Naive thymus-derived CD8-positive, alpha-beta T cell (primary cell): ENCODE measurements at regions of chr1 and their contacts with region 1.

Region 1: GRCh38 chr1:44775078-44775929 is at the start of gene RPS8:
- DNase-seq: peak; percentile 67 to 95 (median 87)
- ATAC-seq: peak; percentile 82 to 83
- H3K4me3 Mint-ChIP-seq: peak within 1 kb of the TSS; percentile 84 to 100 (median 93)
- H3K27ac Mint-ChIP-seq: peak within 1 kb of the TSS; percentile 92 to 99 (median 96)
- H3K4me1 Mint-ChIP-seq: peaks cover 23 to 42% (median 34%) of the 10 kb centered on the region in 4 donors
- H3K27me3 Mint-ChIP-seq: no peaks in the 10 kb centered on the region
- polyA plus RNA-seq, gene RPS8: 1,336 to 1,571 (median 1,431) TPM

Region 2: DNA sequence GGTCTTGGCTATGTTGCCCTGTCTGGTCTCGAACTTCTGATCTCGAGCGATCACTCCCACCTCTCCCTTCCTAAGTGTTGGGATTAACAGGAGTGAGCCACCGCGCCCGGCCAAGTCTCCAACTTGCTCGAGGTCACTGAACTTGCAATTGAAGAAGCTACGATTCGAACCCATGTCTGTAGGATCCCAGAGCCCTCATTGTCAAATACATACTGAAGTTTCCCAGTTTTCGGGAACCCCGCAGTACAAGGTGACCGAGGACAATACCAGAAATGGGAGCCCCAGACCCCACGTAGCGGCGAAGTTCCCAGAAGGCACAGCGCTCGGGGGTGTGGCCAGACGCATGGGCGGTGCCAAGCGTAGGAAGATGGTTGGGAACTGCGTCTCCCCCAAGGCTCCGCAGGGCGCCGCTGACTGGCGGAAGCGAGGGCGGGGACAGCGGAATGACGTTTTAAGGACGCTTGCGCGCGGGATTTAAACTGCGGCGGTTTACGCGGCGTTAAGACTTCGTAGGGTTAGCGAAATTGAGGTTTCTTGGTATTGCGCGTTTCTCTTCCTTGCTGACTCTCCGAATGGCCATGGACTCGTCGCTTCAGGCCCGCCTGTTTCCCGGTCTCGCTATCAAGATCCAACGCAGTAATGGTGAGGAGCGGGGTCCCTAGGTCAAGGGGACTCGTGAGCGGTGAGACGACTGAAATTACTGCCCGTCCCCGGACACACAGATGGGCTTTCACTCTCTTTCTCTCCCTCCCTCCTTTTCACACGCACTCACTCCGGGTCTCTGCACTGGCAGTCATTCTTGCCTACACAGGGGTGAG is 35.7 kb before region 1 on chr1 and contains the start of gene KIF2C:
- POLR2A ChIA-PET with region 1: interaction called, 13 read pairs
- DNase-seq: peak; percentile 92 to 97 (median 94)
- ATAC-seq: peak; percentile 99 to 100
- H3K4me3 Mint-ChIP-seq: peak within 1 kb of the TSS; percentile 83 to 96 (median 93)
- H3K27ac Mint-ChIP-seq: peak within 1 kb of the TSS; percentile 83 to 98 (median 96)
- H3K4me1 Mint-ChIP-seq: peaks cover 5 to 19% (median 14%) of the 10 kb centered on the region in 4 donors
- H3K27me3 Mint-ChIP-seq: no peaks in the 10 kb centered on the region
- polyA plus RNA-seq, gene KIF2C: 0.40 to 0.61 (median 0.40) TPM

Region 3: DNA sequence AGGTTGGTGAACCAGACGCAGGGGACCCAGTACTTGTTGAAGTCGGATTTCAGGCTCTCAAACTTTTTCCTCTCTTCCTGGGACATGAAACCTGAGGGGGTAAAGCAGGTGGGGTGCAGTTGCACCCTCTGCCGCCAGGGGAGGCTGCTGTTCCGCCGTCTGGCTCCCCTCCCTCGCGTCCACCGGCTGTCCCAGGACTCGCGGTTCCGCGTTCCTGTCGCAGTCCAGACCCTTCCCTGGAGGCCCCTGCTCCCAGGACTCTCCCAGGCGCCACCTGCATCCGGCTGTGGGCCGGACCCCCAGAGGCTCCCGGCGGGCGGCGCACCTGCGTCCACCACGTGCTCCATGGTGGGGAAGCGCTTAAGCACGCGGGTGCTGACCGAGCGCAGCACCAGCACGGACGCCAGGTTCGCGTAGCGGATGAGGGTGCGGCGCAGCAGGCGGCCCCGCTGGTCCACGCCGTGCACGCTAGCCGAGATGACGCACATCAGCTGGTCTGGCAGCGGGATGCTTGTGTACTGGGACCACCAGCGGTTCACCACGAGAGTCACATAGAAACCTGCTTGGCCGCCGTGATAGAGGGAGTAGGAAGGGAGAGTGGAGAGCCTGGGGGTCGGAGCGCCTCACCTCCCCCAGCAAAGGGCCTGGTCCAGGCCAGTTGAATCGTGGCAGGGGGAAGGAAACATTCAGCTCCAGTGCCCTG is 11.0 kb after region 1 on chr1:
- POLR2A ChIA-PET with region 1: interaction called, 99 read pairs
- DNase-seq: peak; percentile 64 to 91 (median 79)
- ATAC-seq: peak; percentile 75 to 77
- H3K4me3 Mint-ChIP-seq: peak overlapping the region; percentile 69 to 84 (median 80)
- H3K27ac Mint-ChIP-seq: peak overlapping the region; percentile 35 to 95 (median 88)
- H3K4me1 Mint-ChIP-seq: peaks cover 16 to 34% (median 30%) of the 10 kb centered on the region in 4 donors
- H3K27me3 Mint-ChIP-seq: no peaks in the 10 kb centered on the region

Region 4: GRCh38 chr1:44812822-44813543 is 37.7 kb after region 1 on chr1:
- POLR2A ChIA-PET with region 1: interaction called, 47 read pairs
- DNase-seq: peak in 1 of 10 donors; percentile 45
- ATAC-seq: no peak
- H3K4me3 Mint-ChIP-seq: peak overlapping the region in 5 of 10 donors; percentile 6 to 91 (median 30)
- H3K27ac Mint-ChIP-seq: peak overlapping the region in 9 of 10 donors; percentile 37 to 100 (median 99)
- H3K4me1 Mint-ChIP-seq: peaks cover 34 to 75% (median 72%) of the 10 kb centered on the region in 4 donors
- H3K27me3 Mint-ChIP-seq: no peaks in the 10 kb centered on the region

Region 5: GRCh38 chr1:45011837-45012638 is 236.7 kb after region 1 on chr1 and contains the start of gene UROD:
- POLR2A ChIA-PET with region 1: interaction called, 46 read pairs
- DNase-seq: peak; percentile 75 to 95 (median 88)
- ATAC-seq: peak; percentile 75 to 83
- H3K4me3 Mint-ChIP-seq: peak within 1 kb of the TSS; percentile 81 to 97 (median 93)
- H3K27ac Mint-ChIP-seq: peak within 1 kb of the TSS; percentile 87 to 99 (median 95)
- H3K4me1 Mint-ChIP-seq: peaks cover 21 to 56% (median 49%) of the 10 kb centered on the region in 4 donors
- H3K27me3 Mint-ChIP-seq: no peaks in the 10 kb centered on the region
- polyA plus RNA-seq, gene UROD: 71.6 to 80.9 (median 74.9) TPM

Region 6: DNA sequence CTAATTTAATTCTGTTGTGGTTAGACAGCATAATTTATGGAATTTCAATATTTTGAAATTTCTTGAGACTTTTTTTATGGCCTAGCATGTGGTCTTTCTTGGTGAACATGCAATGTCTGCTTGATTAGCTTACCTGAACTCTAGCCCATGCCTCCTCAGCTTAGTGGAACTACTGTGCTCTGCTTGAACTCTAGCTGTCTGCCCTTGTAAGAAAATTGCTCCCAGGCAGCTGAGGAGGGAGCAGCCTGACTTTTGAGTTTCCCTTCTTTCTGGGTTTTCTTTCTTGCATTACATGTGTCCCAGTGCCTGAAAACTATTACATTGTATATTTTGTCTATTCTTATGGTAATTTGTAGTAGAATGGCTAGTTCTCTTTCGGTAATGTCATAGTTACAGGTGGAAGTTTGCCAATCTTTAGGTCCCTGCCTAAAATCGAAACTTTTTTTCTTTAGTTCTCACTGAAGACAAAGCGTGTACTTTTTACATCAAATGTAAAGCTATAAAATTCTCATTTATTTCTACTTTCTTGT is 1133.4 kb after region 1 on chr1:
- POLR2A ChIA-PET with region 1: no interaction called
- DNase-seq: no peak
- ATAC-seq: no peak
- H3K4me3 Mint-ChIP-seq: no peak overlapping the region
- H3K27ac Mint-ChIP-seq: no peak overlapping the region
- H3K4me1 Mint-ChIP-seq: peaks cover 0 to 2% (median 1%) of the 10 kb centered on the region in 4 donors
- H3K27me3 Mint-ChIP-seq: peaks cover 0 to 3% (median 0%) of the 10 kb centered on the region in 5 donors